ENCODE measurements at regions of chr6 and their contacts with region 1.

Region 1: GRCh38 chr6:119742188-119742803 is 392.7 kb upstream of the MAN1A1 start:
- DNase-seq: peak; percentile 54 to 73
- H3K4me3 ChIP-seq: no peak overlapping the region
- H3K4me3 Mint-ChIP-seq: no peak overlapping the region
- H3K27ac Mint-ChIP-seq: no peak overlapping the region
- H3K4me1 ChIP-seq: no peaks in the 10 kb centered on the region
- H3K4me1 Mint-ChIP-seq: no peaks in the 10 kb centered on the region
- H3K27me3 ChIP-seq: no peaks in the 10 kb centered on the region
- H3K27me3 Mint-ChIP-seq: no peaks in the 10 kb centered on the region
- CTCF ChIP-seq: peak; percentile 85

Region 2: GRCh38 chr6:120077489-120077888 is 335.2 kb after region 1 on chr6:
- CTCF ChIA-PET with region 1: no interaction called
- POLR2A ChIA-PET with region 1: no interaction called
- intact Hi-C with region 1: loop called (anchors 1 kb)
- DNase-seq: peak; percentile 23 to 38
- H3K4me3 ChIP-seq: no peak overlapping the region
- H3K4me3 Mint-ChIP-seq: no peak overlapping the region
- H3K27ac Mint-ChIP-seq: no peak overlapping the region
- H3K4me1 ChIP-seq: no peaks in the 10 kb centered on the region
- H3K4me1 Mint-ChIP-seq: no peaks in the 10 kb centered on the region
- H3K27me3 ChIP-seq: no peaks in the 10 kb centered on the region
- H3K27me3 Mint-ChIP-seq: no peaks in the 10 kb centered on the region
- CTCF ChIP-seq: no peak

Region 3: GRCh38 chr6:120230010-120230409 is 487.7 kb after region 1 on chr6:
- CTCF ChIA-PET with region 1: no interaction called
- POLR2A ChIA-PET with region 1: no interaction called
- intact Hi-C with region 1: loop called (anchors 1 kb)
- DNase-seq: peak in 1 of 2 experiments; percentile 38
- H3K4me3 ChIP-seq: no peak overlapping the region
- H3K4me3 Mint-ChIP-seq: no peak overlapping the region
- H3K27ac Mint-ChIP-seq: no peak overlapping the region
- H3K4me1 ChIP-seq: no peaks in the 10 kb centered on the region
- H3K4me1 Mint-ChIP-seq: peaks cover 6% of the 10 kb centered on the region
- H3K27me3 ChIP-seq: no peaks in the 10 kb centered on the region
- H3K27me3 Mint-ChIP-seq: no peaks in the 10 kb centered on the region
- CTCF ChIP-seq: peak; percentile 18 to 43

Region 4: GRCh38 chr6:120378582-120379220 is 636.4 kb after region 1 on chr6:
- CTCF ChIA-PET with region 1: no interaction called
- POLR2A ChIA-PET with region 1: no interaction called
- intact Hi-C with region 1: loop called (anchors 1 kb)
- DNase-seq: peak in 1 of 2 experiments; percentile 32
- H3K4me3 ChIP-seq: no peak overlapping the region
- H3K4me3 Mint-ChIP-seq: no peak overlapping the region
- H3K27ac Mint-ChIP-seq: no peak overlapping the region
- H3K4me1 ChIP-seq: no peaks in the 10 kb centered on the region
- H3K4me1 Mint-ChIP-seq: no peaks in the 10 kb centered on the region
- H3K27me3 ChIP-seq: no peaks in the 10 kb centered on the region
- H3K27me3 Mint-ChIP-seq: no peaks in the 10 kb centered on the region
- CTCF ChIP-seq: peak; percentile 58 to 74

Region 5: DNA sequence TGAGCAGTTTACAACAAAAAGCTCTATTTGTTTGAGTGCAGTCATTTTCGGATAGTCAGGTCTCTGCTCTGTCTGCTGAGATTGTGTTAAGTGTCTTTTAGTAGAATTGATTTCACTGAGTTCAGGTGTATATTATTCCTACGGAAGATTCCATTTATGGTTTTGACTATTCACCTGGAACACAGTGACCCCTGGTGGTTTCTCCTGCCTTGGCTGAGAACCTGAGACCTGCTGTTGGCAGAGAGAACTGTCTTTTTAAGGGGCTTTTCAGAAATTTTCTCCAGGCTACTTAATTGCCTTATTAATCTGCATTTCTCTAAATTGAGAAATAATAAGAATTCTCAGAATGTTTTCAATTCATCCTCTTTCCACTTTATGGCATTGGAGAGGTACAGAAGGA is 1084.0 kb after region 1 on chr6:
- CTCF ChIA-PET with region 1: no interaction called
- POLR2A ChIA-PET with region 1: no interaction called
- intact Hi-C with region 1: loop called (anchors 1 kb)
- DNase-seq: peak; percentile 47 to 63
- H3K4me3 ChIP-seq: no peak overlapping the region
- H3K4me3 Mint-ChIP-seq: no peak overlapping the region
- H3K27ac Mint-ChIP-seq: no peak overlapping the region
- H3K4me1 ChIP-seq: no peaks in the 10 kb centered on the region
- H3K4me1 Mint-ChIP-seq: no peaks in the 10 kb centered on the region
- H3K27me3 ChIP-seq: no peaks in the 10 kb centered on the region
- H3K27me3 Mint-ChIP-seq: no peaks in the 10 kb centered on the region
- CTCF ChIP-seq: peak; percentile 69 to 76